ENCODE measurements at regions of chr2 and their contacts with region 1.

Region 1: DNA sequence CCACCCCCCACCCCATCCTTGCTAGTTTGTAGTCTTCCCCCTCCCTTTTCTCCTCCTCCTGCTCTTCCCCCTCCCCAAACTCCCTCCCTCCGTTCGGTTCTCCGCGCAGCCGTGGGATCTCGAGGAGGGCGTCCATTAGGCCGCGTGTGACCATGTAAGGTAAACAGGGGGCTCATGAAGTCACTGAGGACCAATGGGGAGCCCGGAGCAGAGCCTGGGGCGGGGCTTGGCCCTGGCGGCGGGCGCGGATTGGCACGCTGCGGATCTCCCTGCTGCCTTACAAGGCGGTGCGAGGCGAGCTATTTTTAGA is 246 bp upstream of the KLF7 start:
- DNase-seq: peak; percentile 98
- ATAC-seq: peak; percentile 95
- H3K4me3 Mint-ChIP-seq: peak overlapping the region; percentile 95
- H3K27ac Mint-ChIP-seq: peak overlapping the region; percentile 94
- H3K4me1 Mint-ChIP-seq: peaks cover 40% of the 10 kb centered on the region
- H3K27me3 Mint-ChIP-seq: peaks cover 3% of the 10 kb centered on the region

Region 2: GRCh38 chr2:207073801-207074678 is 92.0 kb before region 1 on chr2:
- CTCF ChIA-PET with region 1: interaction called, 4 read pairs
- POLR2A ChIA-PET with region 1: interaction called, 19 read pairs
- DNase-seq: peak; percentile 69
- ATAC-seq: peak; percentile 85
- H3K4me3 Mint-ChIP-seq: peak overlapping the region; percentile 66
- H3K27ac Mint-ChIP-seq: peak overlapping the region; percentile 89
- H3K4me1 Mint-ChIP-seq: peaks cover 42% of the 10 kb centered on the region
- H3K27me3 Mint-ChIP-seq: no peaks in the 10 kb centered on the region

Region 3: GRCh38 chr2:207214446-207214845 is 48.5 kb after region 1 on chr2:
- CTCF ChIA-PET with region 1: no interaction called
- POLR2A ChIA-PET with region 1: no interaction called
- DNase-seq: no peak
- ATAC-seq: no peak
- H3K4me3 Mint-ChIP-seq: no peak overlapping the region
- H3K27ac Mint-ChIP-seq: no peak overlapping the region
- H3K4me1 Mint-ChIP-seq: no peaks in the 10 kb centered on the region
- H3K27me3 Mint-ChIP-seq: peaks cover 9% of the 10 kb centered on the region